Naive thymus-derived CD4-positive, alpha-beta T cell (primary cell): ENCODE measurements at regions of chr3 and their contacts with region 1.

Region 1: DNA sequence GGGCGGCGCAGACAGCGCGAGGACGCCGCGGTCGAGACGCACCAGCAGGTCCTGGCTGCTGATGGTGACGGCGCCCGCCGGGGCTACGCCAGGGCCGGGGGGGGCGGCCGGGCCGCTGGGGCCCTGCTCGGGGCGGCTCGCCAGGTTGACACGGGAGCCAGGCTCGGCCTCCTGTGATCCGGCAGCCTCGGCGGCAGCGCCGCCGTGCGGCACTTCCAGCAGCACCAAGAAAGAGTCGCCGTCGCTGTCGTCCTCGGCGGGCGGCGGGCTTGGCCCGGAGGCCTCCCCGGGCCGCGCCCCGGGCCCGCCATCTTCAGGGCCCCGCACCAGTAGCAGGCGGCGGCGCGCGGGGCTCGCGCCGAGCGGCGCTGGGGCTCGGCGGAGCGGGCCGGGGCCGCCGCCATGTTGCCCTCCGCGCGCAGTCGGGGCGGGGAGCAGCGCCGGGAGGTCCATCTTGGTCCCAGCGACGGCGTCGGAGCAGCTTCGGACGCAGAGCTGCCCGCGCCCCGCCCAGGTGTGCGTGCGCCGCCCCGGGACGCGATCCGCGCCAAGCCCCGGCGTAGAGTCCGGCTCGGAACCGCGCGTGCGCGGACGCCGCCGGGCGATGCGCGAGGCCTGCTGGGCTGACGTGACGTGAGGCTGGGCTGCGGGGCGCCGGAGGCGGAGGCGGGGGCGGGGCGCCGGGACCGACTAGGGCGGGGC is at the start of gene ZXDC:
- DNase-seq: peak; percentile 85 to 95 (median 90)
- ATAC-seq: peak; percentile 89
- H3K4me3 ChIP-seq: peak within 1 kb of the TSS; percentile 89
- H3K4me3 Mint-ChIP-seq: peak within 1 kb of the TSS; percentile 81 to 97 (median 92)
- H3K27ac ChIP-seq: peak within 1 kb of the TSS; percentile 87
- H3K27ac Mint-ChIP-seq: peak within 1 kb of the TSS; percentile 82 to 96 (median 92)
- H3K4me1 ChIP-seq: peaks cover 29 to 34% of the 10 kb centered on the region in 2 donors
- H3K4me1 Mint-ChIP-seq: peaks cover 34 to 52% (median 48%) of the 10 kb centered on the region in 7 donors
- H3K27me3 ChIP-seq: no peaks in the 10 kb centered on the region
- H3K27me3 Mint-ChIP-seq: peaks cover 0 to 4% (median 0%) of the 10 kb centered on the region in 5 donors
- total RNA-seq, gene ZXDC: 33.7 to 71.9 (median 67.6) TPM

Region 2: DNA sequence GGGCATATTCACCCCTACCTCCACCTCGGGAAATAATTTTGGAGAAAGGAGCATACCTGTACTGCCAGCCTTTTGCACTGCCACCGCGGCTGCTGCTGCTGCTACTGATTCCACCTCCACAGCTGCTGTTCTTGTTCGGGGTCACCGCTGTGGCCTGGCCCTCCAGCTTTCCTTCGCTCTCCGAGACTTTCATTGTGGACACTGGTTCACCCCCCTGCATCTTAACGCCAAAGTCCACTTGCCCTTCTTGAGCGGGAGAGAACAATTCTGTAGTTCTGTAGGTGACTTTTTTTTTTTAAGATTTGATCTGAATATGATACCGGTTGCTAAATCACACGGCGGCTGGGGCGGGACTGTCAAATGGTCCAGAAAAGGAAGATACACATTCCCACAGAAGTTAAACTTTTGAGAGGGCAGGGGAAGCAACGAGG is 881.0 kb before region 1 on chr3:
- CTCF ChIA-PET with region 1: no interaction called
- POLR2A ChIA-PET with region 1: no interaction called
- intact Hi-C with region 1: loop called (anchors 5 kb)
- DNase-seq: peak in 4 of 9 donors; percentile 10 to 25 (median 16)
- ATAC-seq: no peak
- H3K4me3 ChIP-seq: peak overlapping the region; percentile 82
- H3K4me3 Mint-ChIP-seq: peak overlapping the region; percentile 90 to 99 (median 94)
- H3K27ac ChIP-seq: peak overlapping the region; percentile 90
- H3K27ac Mint-ChIP-seq: peak overlapping the region; percentile 73 to 95 (median 89)
- H3K4me1 ChIP-seq: peaks cover 4 to 15% of the 10 kb centered on the region in 2 donors
- H3K4me1 Mint-ChIP-seq: peaks cover 32 to 50% (median 42%) of the 10 kb centered on the region in 7 donors
- H3K27me3 ChIP-seq: no peaks in the 10 kb centered on the region
- H3K27me3 Mint-ChIP-seq: no peaks in the 10 kb centered on the region

Region 3: DNA sequence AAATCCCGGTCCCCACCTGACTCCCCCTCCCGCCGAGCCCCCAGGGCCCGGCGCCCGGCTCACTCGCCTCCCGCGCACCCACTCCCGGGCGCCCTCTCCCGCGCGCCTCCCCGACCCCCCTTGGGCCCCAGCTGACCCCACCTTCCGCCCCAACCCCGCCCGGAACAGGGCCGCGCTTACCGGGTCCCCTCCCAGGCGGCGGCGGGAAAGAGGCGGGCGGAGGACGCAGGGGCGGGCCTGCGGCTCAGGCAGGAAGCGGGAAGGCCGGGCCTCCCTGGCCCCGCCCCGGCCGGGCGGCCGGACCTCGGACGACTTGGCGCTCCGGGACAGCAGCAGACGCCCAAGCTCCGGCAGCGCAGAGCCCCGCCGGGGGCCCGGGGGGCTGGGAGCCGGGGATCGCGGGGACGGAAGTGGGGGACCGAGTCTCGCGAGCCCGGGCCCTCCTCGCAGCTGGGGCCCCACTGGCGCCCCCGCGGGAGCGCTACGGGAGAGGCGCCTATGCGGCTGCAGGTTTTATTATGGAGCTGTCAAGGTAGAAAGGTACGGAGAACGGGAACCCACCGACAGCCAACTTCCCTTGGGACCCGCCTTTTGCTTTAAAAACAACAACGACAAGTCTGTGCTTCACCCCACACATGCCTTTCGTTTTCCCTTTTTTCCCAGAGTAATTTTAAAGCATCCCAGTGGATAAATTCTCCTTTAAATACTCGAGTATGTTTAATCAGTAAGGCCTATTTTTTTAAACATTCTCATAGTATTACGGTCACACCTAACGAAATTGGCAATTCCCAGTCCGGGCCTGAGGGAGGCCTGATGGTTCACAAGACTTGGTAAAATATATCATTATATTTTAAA is 391.4 kb before region 1 on chr3 and contains the start of gene SLC41A3:
- CTCF ChIA-PET with region 1: no interaction called
- POLR2A ChIA-PET with region 1: no interaction called
- intact Hi-C with region 1: loop called (anchors 1 kb)
- DNase-seq: peak; percentile 73 to 94 (median 84)
- ATAC-seq: peak; percentile 95
- H3K4me3 ChIP-seq: peak within 1 kb of the TSS; percentile 73
- H3K4me3 Mint-ChIP-seq: peak within 1 kb of the TSS; percentile 82 to 94 (median 91)
- H3K27ac ChIP-seq: peak within 1 kb of the TSS; percentile 91
- H3K27ac Mint-ChIP-seq: peak within 1 kb of the TSS; percentile 87 to 96 (median 91)
- H3K4me1 ChIP-seq: peaks cover 0 to 16% of the 10 kb centered on the region in 2 donors
- H3K4me1 Mint-ChIP-seq: peaks cover 11 to 27% (median 20%) of the 10 kb centered on the region in 7 donors
- H3K27me3 ChIP-seq: no peaks in the 10 kb centered on the region
- H3K27me3 Mint-ChIP-seq: peaks cover 0 to 4% (median 0%) of the 10 kb centered on the region in 5 donors
- total RNA-seq, gene SLC41A3: 24.1 to 33.6 (median 29.6) TPM

Region 4: GRCh38 chr3:126357295-126358037 is 118.1 kb before region 1 on chr3 and contains the start of gene KLF15:
- CTCF ChIA-PET with region 1: no interaction called
- POLR2A ChIA-PET with region 1: no interaction called
- intact Hi-C with region 1: loop called (anchors 1 to 2 kb)
- DNase-seq: peak; percentile 50 to 84 (median 66)
- ATAC-seq: peak; percentile 95
- H3K4me3 ChIP-seq: peak within 1 kb of the TSS; percentile 67
- H3K4me3 Mint-ChIP-seq: peak within 1 kb of the TSS; percentile 89 to 95 (median 91)
- H3K27ac ChIP-seq: no peak within 1 kb of the TSS
- H3K27ac Mint-ChIP-seq: peak within 1 kb of the TSS in 5 of 9 donors; percentile 45 to 93 (median 72)
- H3K4me1 ChIP-seq: peaks cover 4 to 7% of the 10 kb centered on the region in 2 donors
- H3K4me1 Mint-ChIP-seq: peaks cover 4 to 17% (median 11%) of the 10 kb centered on the region in 7 donors
- H3K27me3 ChIP-seq: peaks cover 9 to 10% of the 10 kb centered on the region in 2 donors
- H3K27me3 Mint-ChIP-seq: peaks cover 45 to 52% (median 46%) of the 10 kb centered on the region in 5 donors
- total RNA-seq, gene KLF15: 0.57 to 0.81 TPM in 2 of 5 experiments, not detected in the others

Region 5: DNA sequence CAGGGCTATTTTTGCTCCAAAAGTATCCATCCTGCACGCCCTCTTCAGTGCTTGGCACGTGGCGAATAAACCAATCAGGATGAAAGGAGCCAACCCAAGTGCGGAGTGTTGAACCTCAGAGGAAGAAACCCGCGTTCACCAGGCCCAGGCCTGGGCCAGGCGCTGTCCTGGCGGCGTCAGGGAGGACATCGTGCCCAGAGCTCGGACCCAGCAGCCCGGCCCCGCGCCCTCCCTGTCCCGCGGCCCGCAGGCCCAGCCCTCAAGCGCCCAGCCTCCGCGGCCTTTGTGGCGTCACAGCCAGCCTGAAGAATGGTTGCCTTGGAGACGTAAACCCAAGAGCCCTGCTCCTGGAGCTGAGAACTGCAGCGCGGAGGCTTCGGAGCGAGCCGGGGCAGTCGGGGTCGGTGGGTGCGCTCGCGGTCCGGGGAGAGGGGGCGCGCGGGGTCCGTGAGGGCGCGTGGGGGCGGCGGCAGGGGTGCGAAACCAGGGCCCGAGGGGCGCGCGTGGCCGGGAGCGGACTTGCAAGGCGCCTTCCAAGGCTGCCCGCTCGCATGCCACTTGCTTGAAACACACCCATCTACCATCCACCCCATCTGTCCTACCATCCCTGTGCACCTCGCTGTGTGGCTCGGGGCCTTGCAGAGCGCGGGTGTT is 80.9 kb before region 1 on chr3 and contains the start of gene CFAP100:
- CTCF ChIA-PET with region 1: no interaction called
- POLR2A ChIA-PET with region 1: no interaction called
- intact Hi-C with region 1: no loop called
- DNase-seq: no peak
- ATAC-seq: no peak
- H3K4me3 ChIP-seq: no peak within 1 kb of the TSS
- H3K4me3 Mint-ChIP-seq: no peak within 1 kb of the TSS
- H3K27ac ChIP-seq: no peak within 1 kb of the TSS
- H3K27ac Mint-ChIP-seq: no peak within 1 kb of the TSS
- H3K4me1 ChIP-seq: no peaks in the 10 kb centered on the region
- H3K4me1 Mint-ChIP-seq: peaks cover 0 to 4% (median 1%) of the 10 kb centered on the region in 7 donors
- H3K27me3 ChIP-seq: no peaks in the 10 kb centered on the region
- H3K27me3 Mint-ChIP-seq: peaks cover 45 to 55% (median 48%) of the 10 kb centered on the region in 5 donors
- total RNA-seq, gene CFAP100: not detected

Region 6: DNA sequence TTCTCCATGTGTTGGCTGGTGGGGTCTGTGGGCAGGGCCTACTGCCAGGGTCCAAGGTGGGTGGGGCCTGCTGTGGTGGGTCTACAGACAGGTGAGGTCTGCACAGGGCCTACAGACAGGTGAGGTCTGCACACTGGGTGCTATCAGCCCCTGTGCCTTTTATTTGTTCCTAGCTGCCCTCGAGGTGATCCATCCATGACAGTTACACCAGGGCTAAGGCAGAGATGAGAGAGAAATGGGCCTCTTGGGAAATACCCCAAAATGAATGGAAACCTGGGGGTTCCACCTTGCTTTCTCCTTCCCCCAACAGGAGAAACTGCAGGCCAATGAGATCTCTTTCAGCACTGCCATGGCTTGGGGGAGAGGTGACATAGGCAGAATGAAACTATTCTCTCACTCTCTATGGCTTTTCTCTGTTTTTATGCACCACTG is 44.4 kb before region 1 on chr3:
- CTCF ChIA-PET with region 1: no interaction called
- POLR2A ChIA-PET with region 1: no interaction called
- intact Hi-C with region 1: no loop called
- DNase-seq: no peak
- ATAC-seq: no peak
- H3K4me3 ChIP-seq: no peak overlapping the region
- H3K4me3 Mint-ChIP-seq: no peak overlapping the region
- H3K27ac ChIP-seq: no peak overlapping the region
- H3K27ac Mint-ChIP-seq: no peak overlapping the region
- H3K4me1 ChIP-seq: no peaks in the 10 kb centered on the region
- H3K4me1 Mint-ChIP-seq: peaks cover 0 to 5% (median 0%) of the 10 kb centered on the region in 7 donors
- H3K27me3 ChIP-seq: no peaks in the 10 kb centered on the region
- H3K27me3 Mint-ChIP-seq: no peaks in the 10 kb centered on the region

Region 7: DNA sequence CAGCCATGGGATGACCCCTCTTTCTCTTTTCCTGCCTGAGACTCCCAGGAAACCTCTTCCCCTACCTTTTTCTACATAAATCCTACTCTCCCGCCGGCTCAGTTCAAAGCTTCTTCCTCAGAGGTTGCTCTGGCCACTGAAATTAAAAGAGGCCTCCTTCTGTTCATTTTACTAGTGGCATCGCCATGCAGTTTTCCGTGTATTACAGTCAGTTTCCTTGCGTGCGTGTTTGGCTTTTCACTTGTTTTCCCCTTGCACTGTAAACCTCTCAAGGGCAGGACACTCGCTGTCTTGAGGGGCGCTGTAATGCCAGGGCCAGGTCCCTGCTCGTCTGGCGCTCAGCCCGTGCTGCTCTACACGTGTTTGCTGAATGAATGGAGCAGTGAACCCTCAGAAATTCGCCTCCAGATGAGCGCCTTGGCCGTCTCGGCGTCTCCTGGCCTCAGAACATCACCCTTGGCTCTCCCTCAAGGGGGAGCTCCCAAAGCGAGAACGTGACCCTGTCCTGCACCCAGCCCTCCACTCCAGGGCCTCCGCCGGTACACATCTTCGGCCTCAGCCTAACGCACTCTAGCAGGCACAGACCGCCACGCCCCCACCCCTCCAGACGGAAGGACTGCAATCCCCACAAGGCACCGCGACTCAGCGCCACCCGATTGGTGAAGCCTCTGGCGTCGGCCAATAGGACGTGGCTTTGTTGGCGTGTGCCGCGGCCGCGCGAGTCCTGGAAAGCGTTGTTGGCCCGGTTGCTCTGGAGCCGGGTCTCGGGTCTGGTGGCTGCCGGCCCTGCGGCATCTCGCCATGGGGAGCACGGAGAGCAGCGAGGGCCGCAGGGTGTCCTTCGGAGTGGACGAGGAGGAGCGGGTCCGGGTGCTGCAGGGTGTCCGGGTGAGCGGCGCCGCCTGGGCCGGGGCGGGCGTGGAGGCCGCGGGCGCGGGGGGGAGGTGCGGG is 228.2 kb after region 1 on chr3 and contains the start of gene CHCHD6:
- CTCF ChIA-PET with region 1: no interaction called
- POLR2A ChIA-PET with region 1: interaction called, 3 read pairs
- intact Hi-C with region 1: loop called (anchors 1 kb)
- DNase-seq: peak; percentile 92 to 99 (median 96)
- ATAC-seq: peak; percentile 99
- H3K4me3 ChIP-seq: peak within 1 kb of the TSS; percentile 82
- H3K4me3 Mint-ChIP-seq: peak within 1 kb of the TSS; percentile 83 to 99 (median 97)
- H3K27ac ChIP-seq: peak within 1 kb of the TSS; percentile 69
- H3K27ac Mint-ChIP-seq: peak within 1 kb of the TSS; percentile 71 to 98 (median 92)
- H3K4me1 ChIP-seq: peaks cover 6 to 13% of the 10 kb centered on the region in 2 donors
- H3K4me1 Mint-ChIP-seq: peaks cover 17 to 28% (median 21%) of the 10 kb centered on the region in 7 donors
- H3K27me3 ChIP-seq: peaks cover 0 to 5% of the 10 kb centered on the region in 2 donors
- H3K27me3 Mint-ChIP-seq: peaks cover 10 to 42% (median 19%) of the 10 kb centered on the region in 5 donors
- total RNA-seq, gene CHCHD6: 5.4 to 14.0 (median 10.0) TPM

Region 8: DNA sequence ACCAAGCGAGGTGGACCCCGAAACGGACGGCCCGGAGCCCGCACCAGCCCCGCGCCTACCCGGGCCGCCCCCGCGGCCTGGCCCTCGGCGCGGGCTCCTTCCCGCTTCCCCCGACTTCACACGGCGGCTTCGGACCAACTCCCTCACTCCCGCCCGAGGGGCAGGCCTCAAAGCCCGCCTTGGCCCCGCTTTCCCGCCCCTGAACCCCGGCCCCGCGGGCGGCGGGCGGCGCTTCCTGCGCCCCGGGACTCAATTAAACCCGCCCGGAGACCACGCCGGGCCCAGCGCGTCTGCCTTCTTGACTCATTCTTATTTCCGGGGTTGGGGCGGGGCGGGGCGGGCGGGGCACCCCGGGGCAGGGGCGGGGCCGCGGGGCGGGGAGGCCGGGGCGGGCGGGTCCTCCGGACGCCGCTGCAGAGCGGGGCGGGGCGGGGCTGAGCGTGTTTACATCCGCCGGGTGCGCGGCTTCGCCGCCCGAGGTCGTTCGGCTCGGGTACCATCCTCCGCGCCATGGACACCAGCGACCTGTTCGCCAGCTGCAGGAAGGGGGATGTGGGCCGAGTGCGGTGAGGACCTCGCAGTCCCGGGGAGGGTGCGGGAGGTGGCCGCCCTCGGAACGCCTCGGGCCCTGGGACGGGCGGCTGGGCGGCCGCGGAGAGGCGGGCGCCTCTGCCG is 1197.1 kb after region 1 on chr3 and contains the start of gene ABTB1:
- CTCF ChIA-PET with region 1: no interaction called
- POLR2A ChIA-PET with region 1: interaction called, 3 read pairs
- intact Hi-C with region 1: loop called (anchors 1 to 5 kb)
- DNase-seq: peak; percentile 73 to 88 (median 83)
- ATAC-seq: peak; percentile 93
- H3K4me3 ChIP-seq: peak within 1 kb of the TSS; percentile 86
- H3K4me3 Mint-ChIP-seq: peak within 1 kb of the TSS; percentile 88 to 96 (median 94)
- H3K27ac ChIP-seq: peak within 1 kb of the TSS; percentile 98
- H3K27ac Mint-ChIP-seq: peak within 1 kb of the TSS; percentile 92 to 98 (median 97)
- H3K4me1 ChIP-seq: peaks cover 13 to 17% of the 10 kb centered on the region in 2 donors
- H3K4me1 Mint-ChIP-seq: peaks cover 17 to 37% (median 33%) of the 10 kb centered on the region in 7 donors
- H3K27me3 ChIP-seq: no peaks in the 10 kb centered on the region
- H3K27me3 Mint-ChIP-seq: no peaks in the 10 kb centered on the region
- total RNA-seq, gene ABTB1: 26.7 to 182 (median 124) TPM